Transverse colon (tissue), 4 donors: ENCODE measurements at regions of chr15 and their contacts with region 1.

Region 1: DNA sequence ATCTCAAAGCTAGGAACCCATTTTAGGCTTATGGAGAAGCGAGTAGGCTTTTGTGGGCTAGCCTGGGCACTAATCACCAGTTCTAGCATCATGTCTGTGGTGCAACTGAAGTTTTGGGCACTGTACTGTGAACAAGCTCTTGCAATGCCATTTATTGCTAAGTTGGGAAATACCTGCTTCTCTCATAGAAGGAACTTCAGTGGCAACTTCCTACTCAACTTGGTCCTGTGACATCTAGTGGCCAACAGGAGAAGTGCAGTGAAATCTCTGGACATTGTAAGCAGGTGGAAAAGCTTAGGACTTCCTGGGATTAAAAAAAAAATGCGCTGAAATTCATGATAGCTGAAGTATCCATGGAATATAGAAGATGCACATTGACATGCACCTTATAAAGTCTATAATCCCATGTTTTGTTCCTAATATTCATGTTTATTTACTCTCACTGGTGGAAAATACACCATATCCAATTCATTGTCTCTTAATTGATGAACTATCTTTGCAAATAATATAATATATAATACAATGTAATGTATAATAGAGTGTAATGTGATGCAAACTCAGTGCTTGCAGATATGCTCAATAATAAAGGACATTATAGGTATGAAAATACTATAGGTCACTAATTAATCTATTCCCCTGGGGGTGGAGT is 6.5 kb upstream of the ALDH1A3 start:
- DNase-seq: peak; percentile 78
- H3K4me3 ChIP-seq: no peak overlapping the region
- H3K27ac ChIP-seq: no peak overlapping the region
- H3K4me1 ChIP-seq: peaks cover 0 to 3% (median 0%) of the 10 kb centered on the region in 4 donors
- H3K27me3 ChIP-seq: peaks cover 12% of the 10 kb centered on the region
- CTCF ChIP-seq: peak; percentile 93 to 95 (median 94)
- EP300 ChIP-seq: no peak
- POLR2A ChIP-seq: no peak

Region 2: DNA sequence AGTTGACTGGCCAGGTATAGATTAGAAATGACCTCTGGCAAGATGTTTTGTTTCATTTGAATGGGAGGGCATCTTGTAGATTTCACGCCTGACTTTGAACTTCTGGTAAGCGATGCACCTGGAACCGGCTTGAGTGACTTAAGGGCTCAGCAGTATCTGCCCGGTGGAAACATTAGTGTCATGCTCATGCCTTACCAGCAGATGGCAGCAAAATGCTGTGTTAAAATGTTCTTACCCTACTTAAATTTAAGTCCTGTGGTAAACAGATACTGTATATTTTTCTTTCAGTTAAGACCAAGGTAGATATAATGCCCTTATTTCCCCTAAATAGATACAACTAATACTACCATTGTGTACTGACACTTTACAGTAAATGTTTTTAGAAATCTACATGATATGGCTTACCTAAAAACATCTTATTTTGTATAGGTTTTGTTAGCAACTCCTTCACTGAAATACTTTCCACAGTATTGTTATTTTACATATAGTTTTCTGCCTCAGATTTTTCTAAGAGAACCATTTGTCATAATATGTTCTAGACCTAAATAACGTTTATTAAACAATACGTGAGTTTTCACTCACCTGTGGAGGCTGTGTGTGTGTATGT is 245.3 kb before region 1 on chr15:
- in situ Hi-C with region 1: loop called in 3 of 4 experiments (anchors 5 to 25 kb)
- intact Hi-C with region 1: loop called (anchors 5 kb)
- DNase-seq: peak; percentile 70
- H3K4me3 ChIP-seq: no peak overlapping the region
- H3K27ac ChIP-seq: no peak overlapping the region
- H3K4me1 ChIP-seq: no peaks in the 10 kb centered on the region
- H3K27me3 ChIP-seq: no peaks in the 10 kb centered on the region
- CTCF ChIP-seq: peak; percentile 83 to 85 (median 84)
- EP300 ChIP-seq: no peak
- POLR2A ChIP-seq: no peak

Region 3: GRCh38 chr15:100671858-100672543 is 201.2 kb before region 1 on chr15:
- in situ Hi-C with region 1: loop called in 1 of 4 experiments (anchors 25 kb)
- intact Hi-C with region 1: no loop called
- DNase-seq: no peak
- H3K4me3 ChIP-seq: no peak overlapping the region
- H3K27ac ChIP-seq: no peak overlapping the region
- H3K4me1 ChIP-seq: peaks cover 0 to 5% (median 0%) of the 10 kb centered on the region in 4 donors
- H3K27me3 ChIP-seq: no peaks in the 10 kb centered on the region
- CTCF ChIP-seq: peak; percentile 23 to 37 (median 25)
- EP300 ChIP-seq: no peak
- POLR2A ChIP-seq: no peak

Region 4: DNA sequence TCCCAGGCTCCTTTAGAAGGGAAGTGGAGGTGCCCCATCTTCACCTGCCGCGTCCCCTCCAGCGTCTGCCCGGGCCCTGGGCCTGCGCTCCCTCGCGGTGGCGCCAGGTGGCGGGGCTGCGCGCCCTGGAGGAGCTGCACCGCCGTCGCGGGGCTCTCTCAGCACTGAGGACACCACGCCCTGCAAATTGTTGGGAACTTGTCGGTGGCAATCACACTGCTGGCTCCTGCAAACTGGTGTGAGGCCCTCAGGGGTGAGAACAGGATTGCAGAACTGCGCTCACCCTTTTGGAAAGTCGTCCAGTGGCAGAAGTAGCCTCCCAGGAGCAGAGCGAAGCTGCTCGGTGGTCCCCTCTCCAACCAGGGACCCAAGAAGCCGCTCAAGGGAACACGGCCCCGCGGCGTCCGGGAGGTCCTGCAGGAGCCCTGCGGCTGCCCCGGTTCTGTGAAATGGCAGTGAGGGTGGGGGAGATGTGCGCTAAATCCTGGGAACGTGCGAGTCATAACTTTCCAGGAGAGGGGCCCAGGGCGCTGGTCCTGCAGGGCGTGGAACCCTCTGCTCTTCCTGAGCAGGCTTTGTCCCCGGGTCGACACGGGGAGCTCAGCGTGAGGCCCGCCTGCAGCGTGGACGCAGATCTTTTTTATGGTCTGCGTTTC is 45.0 kb after region 1 on chr15:
- in situ Hi-C with region 1: no loop called
- intact Hi-C with region 1: no loop called
- DNase-seq: peak; percentile 90
- H3K4me3 ChIP-seq: peak overlapping the region; percentile 53 to 78 (median 74)
- H3K27ac ChIP-seq: peak overlapping the region; percentile 84 to 90 (median 85)
- H3K4me1 ChIP-seq: peaks cover 4 to 30% (median 8%) of the 10 kb centered on the region in 4 donors
- H3K27me3 ChIP-seq: no peaks in the 10 kb centered on the region
- CTCF ChIP-seq: peak; percentile 93 to 98 (median 97)
- EP300 ChIP-seq: no peak
- POLR2A ChIP-seq: peak; percentile 48